ENCODE measurements at regions of chr14 and their contacts with region 1.

Region 1: GRCh38 chr14:61461808-61462275 is 140.5 kb downstream of the PRKCH start:
- DNase-seq: no peak
- ATAC-seq: peak; percentile 51 to 52

Region 2: GRCh38 chr14:61252369-61253063 is 209.3 kb before region 1 on chr14:
- intact Hi-C with region 1: no loop called
- DNase-seq: peak; percentile 71
- ATAC-seq: peak; percentile 97

Region 3: DNA sequence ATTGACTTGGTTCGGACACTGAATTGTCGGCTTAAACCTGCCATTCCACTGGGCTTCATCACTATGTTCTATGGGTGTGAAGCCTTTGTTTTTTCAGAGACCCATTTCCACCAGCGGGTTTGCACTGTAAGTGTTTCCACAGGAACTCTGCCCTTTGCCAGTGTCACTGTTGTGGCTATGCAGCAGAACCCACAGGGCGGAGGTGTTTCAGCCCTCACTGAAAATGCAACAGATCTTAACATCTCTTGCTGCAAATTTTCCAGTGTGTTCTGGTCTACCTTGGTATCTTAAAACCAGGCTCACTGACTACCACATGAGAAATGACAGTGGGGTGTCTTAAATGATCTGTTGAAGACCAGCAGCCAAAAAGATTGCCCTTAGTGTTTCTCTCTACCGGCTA is 119.4 kb before region 1 on chr14:
- intact Hi-C with region 1: no loop called
- DNase-seq: peak; percentile 48
- ATAC-seq: peak; percentile 37 to 47

Region 4: DNA sequence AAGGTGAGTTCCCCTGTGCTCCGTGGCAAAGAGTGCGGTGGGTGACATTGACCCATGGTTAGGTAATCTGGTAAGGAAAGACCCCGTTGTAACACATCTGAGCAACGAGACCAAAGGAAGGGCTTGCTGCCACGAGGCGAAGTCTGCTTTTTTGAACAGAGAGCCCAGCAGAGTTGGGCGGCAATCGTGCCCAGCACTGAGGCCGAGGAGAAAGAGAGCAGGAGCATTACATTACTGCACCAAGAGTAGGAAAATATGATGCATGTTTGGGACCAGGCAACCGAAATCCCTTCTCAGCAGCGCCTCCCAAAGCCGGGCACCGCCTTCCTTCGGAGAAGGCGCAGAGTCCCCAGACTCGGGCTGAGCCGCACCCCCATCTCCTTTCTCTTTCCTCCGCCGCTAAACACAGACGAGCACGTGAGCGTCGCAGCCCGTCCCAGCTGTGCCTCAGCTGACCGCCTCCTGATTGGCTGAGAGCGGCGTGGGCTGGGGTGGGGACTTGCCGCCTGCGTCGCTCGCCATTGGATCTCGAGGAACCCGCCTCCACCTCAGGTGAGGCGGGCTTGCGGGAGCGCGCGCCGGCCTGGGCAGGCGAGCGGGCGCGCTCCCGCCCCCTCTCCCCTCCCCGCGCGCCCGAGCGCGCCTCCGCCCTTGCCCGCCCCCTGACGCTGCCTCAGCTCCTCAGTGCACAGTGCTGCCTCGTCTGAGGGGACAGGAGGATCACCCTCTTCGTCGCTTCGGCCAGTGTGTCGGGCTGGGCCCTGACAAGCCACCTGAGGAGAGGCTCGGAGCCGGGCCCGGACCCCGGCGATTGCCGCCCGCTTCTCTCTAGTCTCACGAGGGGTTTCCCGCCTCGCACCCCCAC is 233.2 kb after region 1 on chr14 and contains the start of gene HIF1A:
- intact Hi-C with region 1: loop called in 1 of 2 experiments (anchors 5 kb)
- DNase-seq: peak; percentile 97
- ATAC-seq: peak; percentile 97 to 98
- total RNA-seq, gene HIF1A: 50.9 to 109 TPM

Region 5: DNA sequence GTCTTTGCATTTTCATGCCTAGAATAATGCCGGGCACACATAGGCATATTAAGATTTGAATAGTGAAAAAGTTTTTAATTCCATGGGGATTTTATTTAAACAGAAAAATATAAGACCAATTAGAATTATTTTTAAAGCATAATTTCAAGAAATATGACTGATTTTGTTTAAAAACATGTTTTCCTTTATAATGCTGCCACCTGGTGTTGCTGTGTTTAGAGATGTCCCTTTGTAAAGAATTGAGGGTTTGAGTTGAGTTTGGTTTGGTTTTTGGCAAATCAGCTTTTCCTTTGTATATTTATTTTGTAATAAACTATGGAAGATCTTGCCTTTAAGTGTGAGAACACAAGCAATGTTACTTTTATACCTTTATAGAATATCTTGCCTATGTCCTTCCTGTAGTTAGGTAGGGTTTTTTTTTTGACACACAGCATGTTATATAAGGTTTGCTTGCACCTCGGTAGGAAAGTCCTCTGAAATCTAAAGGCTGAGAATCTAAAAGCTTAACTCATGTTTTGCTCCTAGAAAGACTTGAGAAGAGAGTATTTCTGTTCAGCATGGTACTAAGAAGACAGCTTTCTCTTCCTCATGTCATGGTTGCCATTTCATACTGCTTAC is 269.0 kb after region 1 on chr14:
- intact Hi-C with region 1: loop called in 1 of 2 experiments (anchors 2 kb)
- DNase-seq: no peak
- ATAC-seq: no peak

Region 6: GRCh38 chr14:61837336-61838229 is 375.7 kb after region 1 on chr14:
- intact Hi-C with region 1: loop called (anchors 2 kb)
- DNase-seq: peak; percentile 80
- ATAC-seq: peak; percentile 93 to 95